H1 (cell line): ENCODE measurements at regions of chr10 and their contacts with region 1.

Region 1: GRCh38 chr10:130190055-130190736 is 54.0 kb downstream of the GLRX3 start:
- DNase-seq: peak; percentile 87 to 99
- H3K4me3 ChIP-seq: peak overlapping the region; percentile 35 to 66 (median 51)
- H3K27ac ChIP-seq: no peak overlapping the region
- H3K4me1 ChIP-seq: peaks cover 0 to 4% (median 3%) of the 10 kb centered on the region in 4 experiments; a peak in 2 of 7 replicates
- H3K27me3 ChIP-seq: no peaks in the 10 kb centered on the region
- CTCF ChIP-seq: peak; percentile 99 to 100 (median 100)
- EP300 ChIP-seq: peak in 1 of 2 experiments; percentile 31; a peak in 1 of 3 replicates
- POLR2A ChIP-seq: peak in 1 of 2 experiments; percentile 8; a peak in 1 of 3 replicates
- RAD21 ChIP-seq: peak; percentile 98 to 99

Region 2: DNA sequence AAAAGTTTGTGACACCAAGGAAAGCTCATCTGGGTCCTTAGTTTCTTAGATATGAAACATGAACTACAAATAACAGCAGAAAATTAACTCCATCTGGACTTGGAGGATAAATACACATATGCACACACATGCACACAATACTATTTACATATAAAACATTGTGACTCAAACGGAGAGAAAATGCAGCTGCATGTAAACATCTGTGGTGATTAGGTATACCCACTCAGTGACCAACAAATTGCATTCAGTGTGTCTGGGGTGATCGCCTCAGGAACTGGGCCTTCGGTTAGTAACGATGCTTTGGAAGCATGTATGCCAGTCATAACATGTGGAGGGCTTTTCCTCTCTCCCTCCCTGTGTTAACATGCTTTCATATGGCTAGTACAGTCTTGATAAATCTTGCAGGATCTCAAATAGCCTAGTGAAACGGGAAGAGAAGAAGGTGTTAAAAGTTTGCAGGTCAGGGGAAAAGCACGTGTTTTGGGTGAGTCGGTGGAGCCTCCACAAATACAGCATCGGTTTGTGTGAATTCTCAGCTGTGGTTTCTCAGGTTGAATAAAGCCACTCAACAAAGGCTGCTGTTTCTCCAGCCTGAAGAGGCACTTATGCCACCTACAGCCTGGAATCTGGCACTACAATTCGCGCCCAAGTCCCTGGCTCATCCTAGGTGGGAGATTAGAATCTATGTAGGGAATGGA is 62.7 kb before region 1 on chr10:
- CTCF ChIA-PET with region 1: no interaction called
- POLR2A ChIA-PET with region 1: no interaction called
- DNase-seq: peak in 1 of 2 experiments; percentile 79
- H3K4me3 ChIP-seq: no peak overlapping the region
- H3K27ac ChIP-seq: no peak overlapping the region
- H3K4me1 ChIP-seq: peaks cover 2 to 4% (median 3%) of the 10 kb centered on the region in 4 experiments; a peak in 4 of 7 replicates
- H3K27me3 ChIP-seq: peaks cover 0 to 4% (median 2%) of the 10 kb centered on the region in 4 experiments; a peak in 1 of 7 replicates
- CTCF ChIP-seq: peak; percentile 73 to 90 (median 77)
- EP300 ChIP-seq: no peak
- POLR2A ChIP-seq: no peak
- RAD21 ChIP-seq: peak; percentile 65 to 74

Region 3: GRCh38 chr10:130336617-130337304 is 146.6 kb after region 1 on chr10:
- CTCF ChIA-PET with region 1: interaction called, 15 read pairs
- POLR2A ChIA-PET with region 1: no interaction called
- DNase-seq: peak in 1 of 2 experiments; percentile 58
- H3K4me3 ChIP-seq: no peak overlapping the region
- H3K27ac ChIP-seq: no peak overlapping the region
- H3K4me1 ChIP-seq: no peaks in the 10 kb centered on the region
- H3K27me3 ChIP-seq: no peaks in the 10 kb centered on the region
- CTCF ChIP-seq: peak; percentile 60 to 78 (median 68)
- EP300 ChIP-seq: no peak
- POLR2A ChIP-seq: no peak
- RAD21 ChIP-seq: peak; percentile 71 to 81